ENCODE measurements at regions of chr16 and their contacts with region 1.

Region 1: DNA sequence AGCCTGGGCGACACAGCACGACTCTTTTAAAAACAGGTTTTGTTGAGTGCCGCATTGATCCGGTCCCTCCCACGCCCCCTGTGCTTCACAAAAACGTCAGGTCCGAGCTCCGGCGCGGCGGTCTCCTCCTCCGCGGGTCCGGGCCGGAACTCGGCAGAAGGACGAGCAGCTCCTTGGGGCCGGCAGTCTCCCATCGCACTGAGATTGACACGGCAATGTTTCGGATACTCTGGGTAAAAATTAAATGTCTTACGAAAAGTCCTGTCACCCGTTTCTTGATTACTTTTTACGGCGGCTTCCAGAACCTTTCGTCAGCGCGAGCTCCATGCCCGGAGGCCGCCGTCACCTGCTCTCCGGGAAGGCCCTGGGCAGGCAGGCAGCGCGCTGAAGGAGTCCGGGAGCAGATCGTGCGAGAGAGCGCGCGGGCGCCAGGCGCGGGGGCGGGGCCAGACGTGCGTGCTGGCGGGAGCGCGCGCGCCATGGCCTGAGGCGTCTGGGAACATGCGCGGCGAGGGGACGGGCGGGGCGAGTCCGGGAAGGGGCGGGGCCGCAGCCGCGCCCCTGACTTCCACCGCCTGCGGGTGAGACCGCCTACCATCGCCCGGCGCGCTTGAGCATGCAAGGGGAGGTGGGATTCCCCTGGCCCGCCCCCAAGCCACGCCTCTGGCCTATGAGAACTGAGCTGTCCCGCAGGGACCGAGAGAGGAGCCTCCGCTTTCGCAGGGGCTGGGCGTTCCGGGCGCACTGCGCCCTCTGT is 11.7 kb upstream of the SRL start:
- DNase-seq: peak; percentile 100
- H3K4me3 ChIP-seq: peak overlapping the region; percentile 59 to 61
- H3K27ac ChIP-seq: peak overlapping the region; percentile 90 to 94
- H3K4me1 ChIP-seq: peaks cover 11% of the 10 kb centered on the region
- H3K27me3 ChIP-seq: no peaks in the 10 kb centered on the region
- CTCF ChIP-seq: no peak
- POLR2A ChIP-seq: peak; percentile 52

Region 2: DNA sequence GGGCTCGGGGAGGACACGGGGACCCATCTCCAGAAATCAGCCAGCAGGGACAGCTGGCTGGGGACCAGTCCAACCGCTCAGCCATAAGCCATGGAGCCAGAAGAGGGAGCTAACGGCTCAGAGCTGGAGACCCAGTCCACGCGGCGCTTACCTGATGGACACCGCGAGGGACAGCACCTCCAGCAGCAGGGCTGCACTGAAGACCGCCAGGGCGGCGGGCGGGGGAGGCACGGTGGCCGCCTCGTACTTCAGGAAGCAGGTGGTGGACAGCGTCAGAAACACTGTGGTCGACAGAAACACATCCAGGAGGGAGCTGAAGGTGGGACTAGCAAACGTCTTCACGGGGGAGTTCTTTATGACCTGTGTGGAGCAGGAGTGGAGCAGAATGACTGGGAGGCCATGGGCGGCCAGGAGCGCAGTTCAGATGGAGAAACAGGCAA is 270.5 kb before region 1 on chr16:
- intact Hi-C with region 1: loop called (anchors 10 kb)
- DNase-seq: peak; percentile 88
- H3K4me3 ChIP-seq: no peak overlapping the region
- H3K27ac ChIP-seq: no peak overlapping the region
- H3K4me1 ChIP-seq: peaks cover 14% of the 10 kb centered on the region
- H3K27me3 ChIP-seq: no peaks in the 10 kb centered on the region
- CTCF ChIP-seq: peak; percentile 45 to 65 (median 59)
- POLR2A ChIP-seq: no peak

Region 3: DNA sequence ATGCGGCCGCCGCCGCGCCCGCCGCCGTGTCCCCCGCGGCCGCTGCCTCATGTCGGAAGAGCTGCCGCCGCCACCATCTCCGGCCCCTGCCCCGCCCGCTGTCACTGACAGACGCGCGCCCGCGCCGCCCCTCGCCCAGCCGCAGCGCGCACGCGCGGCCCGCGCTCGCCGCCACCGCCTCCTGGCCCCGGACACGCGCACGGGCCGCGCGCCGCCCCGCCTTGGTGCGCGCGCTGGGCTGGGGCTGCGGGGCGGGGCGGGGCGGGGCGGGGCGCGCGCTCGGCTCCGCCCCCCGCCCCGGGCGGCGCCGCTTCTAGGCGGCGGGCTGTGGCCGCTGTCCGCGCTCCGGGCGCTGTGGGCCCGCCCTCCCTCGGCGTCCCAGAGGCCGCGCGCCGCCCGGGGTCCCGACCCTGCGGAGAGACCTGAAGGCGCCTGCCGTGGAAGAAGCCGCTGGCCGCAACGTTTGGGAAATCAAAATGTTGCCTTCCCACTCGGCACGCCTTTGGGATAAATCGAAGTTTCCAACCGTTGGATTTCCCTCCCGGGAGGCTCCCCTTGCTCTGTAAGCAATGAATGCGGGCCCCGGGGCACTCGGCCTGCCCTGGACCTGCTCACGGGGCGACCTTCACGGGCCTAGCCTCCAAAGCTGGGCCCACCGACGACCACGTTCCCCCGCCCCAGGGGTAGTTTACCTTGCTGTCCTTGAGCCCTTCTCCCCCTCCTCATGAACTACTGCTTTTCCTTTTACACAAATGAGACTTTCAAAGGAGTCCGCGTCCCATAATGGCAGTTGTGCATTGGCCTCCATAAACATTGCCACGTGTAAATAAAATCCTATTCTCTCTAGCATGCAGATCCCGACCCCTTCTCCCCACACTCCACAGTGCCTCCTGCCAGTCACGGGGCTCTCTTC is 137.0 kb before region 1 on chr16 and contains the start of gene ADCY9:
- intact Hi-C with region 1: loop called (anchors 10 kb)
- DNase-seq: peak; percentile 87
- H3K4me3 ChIP-seq: peak within 1 kb of the TSS; percentile 67 to 78
- H3K27ac ChIP-seq: peak within 1 kb of the TSS; percentile 77 to 84
- H3K4me1 ChIP-seq: peaks cover 21% of the 10 kb centered on the region
- H3K27me3 ChIP-seq: no peaks in the 10 kb centered on the region
- CTCF ChIP-seq: no peak
- POLR2A ChIP-seq: no peak
- total RNA-seq, gene ADCY9: 52.8 to 77.2 TPM

Region 4: DNA sequence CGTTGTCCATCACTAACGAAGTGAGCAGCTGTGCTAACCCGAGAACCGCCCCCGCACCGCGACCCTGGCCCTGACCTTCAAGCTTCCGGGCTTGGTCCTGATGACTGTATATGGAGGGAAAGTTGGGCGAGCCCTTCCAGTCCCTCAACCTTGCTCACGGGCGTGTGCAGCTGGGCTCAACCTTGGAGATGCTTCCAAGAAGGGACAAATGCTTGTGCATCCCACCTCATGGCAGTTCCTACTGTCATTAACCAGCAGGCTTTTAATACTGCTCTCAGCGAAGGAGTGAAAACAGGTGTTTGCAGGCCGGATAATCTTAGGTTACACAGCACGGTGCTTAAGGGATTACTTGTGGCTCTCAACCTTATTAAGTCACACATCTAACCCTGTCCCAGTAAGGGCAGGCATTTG is 45.2 kb before region 1 on chr16:
- intact Hi-C with region 1: loop called (anchors 5 kb)
- DNase-seq: no peak
- H3K4me3 ChIP-seq: no peak overlapping the region
- H3K27ac ChIP-seq: no peak overlapping the region
- H3K4me1 ChIP-seq: peaks cover 19% of the 10 kb centered on the region
- H3K27me3 ChIP-seq: no peaks in the 10 kb centered on the region
- CTCF ChIP-seq: no peak
- POLR2A ChIP-seq: no peak

Measured in testis (tissue), 5 donors.